CD8-positive, alpha-beta memory T cell (primary cell): ENCODE measurements at regions of chr14 and their contacts with region 1.

Region 1: GRCh38 chr14:35776823-35777222 is 32.3 kb downstream of the RALGAPA1 start:
- DNase-seq: no peak
- H3K4me3 ChIP-seq: no peak overlapping the region
- H3K4me3 Mint-ChIP-seq: no peak overlapping the region
- H3K27ac ChIP-seq: no peak overlapping the region
- H3K27ac Mint-ChIP-seq: no peak overlapping the region
- H3K4me1 ChIP-seq: no peaks in the 10 kb centered on the region
- H3K4me1 Mint-ChIP-seq: peaks cover 9 to 28% (median 22%) of the 10 kb centered on the region in 3 donors
- H3K27me3 ChIP-seq: no peaks in the 10 kb centered on the region
- H3K27me3 Mint-ChIP-seq: peaks cover 0 to 2% of the 10 kb centered on the region in 2 donors

Region 2: GRCh38 chr14:35261774-35262173 is 515.0 kb before region 1 on chr14:
- CTCF ChIA-PET with region 1: no interaction called
- POLR2A ChIA-PET with region 1: interaction called, 11 read pairs
- DNase-seq: no peak
- H3K4me3 ChIP-seq: no peak overlapping the region
- H3K4me3 Mint-ChIP-seq: no peak overlapping the region
- H3K27ac ChIP-seq: no peak overlapping the region
- H3K27ac Mint-ChIP-seq: peak overlapping the region in 1 of 8 donors; percentile 37
- H3K4me1 ChIP-seq: no peaks in the 10 kb centered on the region
- H3K4me1 Mint-ChIP-seq: peaks cover 0 to 6% (median 1%) of the 10 kb centered on the region in 3 donors
- H3K27me3 ChIP-seq: no peaks in the 10 kb centered on the region
- H3K27me3 Mint-ChIP-seq: peaks cover 0 to 1% of the 10 kb centered on the region in 2 donors

Region 3: GRCh38 chr14:35808076-35808652 is 31.3 kb after region 1 on chr14:
- CTCF ChIA-PET with region 1: no interaction called
- POLR2A ChIA-PET with region 1: no interaction called
- DNase-seq: peak in 1 of 5 donors; percentile 21
- H3K4me3 ChIP-seq: peak overlapping the region; percentile 85
- H3K4me3 Mint-ChIP-seq: peak overlapping the region; percentile 96 to 99 (median 98)
- H3K27ac ChIP-seq: peak overlapping the region; percentile 74
- H3K27ac Mint-ChIP-seq: peak overlapping the region; percentile 93 to 100 (median 99)
- H3K4me1 ChIP-seq: peaks cover 18% of the 10 kb centered on the region
- H3K4me1 Mint-ChIP-seq: peaks cover 35 to 51% (median 46%) of the 10 kb centered on the region in 3 donors
- H3K27me3 ChIP-seq: no peaks in the 10 kb centered on the region
- H3K27me3 Mint-ChIP-seq: no peaks in the 10 kb centered on the region